ENCODE measurements at regions of chr9 and their contacts with region 1.

Region 1: DNA sequence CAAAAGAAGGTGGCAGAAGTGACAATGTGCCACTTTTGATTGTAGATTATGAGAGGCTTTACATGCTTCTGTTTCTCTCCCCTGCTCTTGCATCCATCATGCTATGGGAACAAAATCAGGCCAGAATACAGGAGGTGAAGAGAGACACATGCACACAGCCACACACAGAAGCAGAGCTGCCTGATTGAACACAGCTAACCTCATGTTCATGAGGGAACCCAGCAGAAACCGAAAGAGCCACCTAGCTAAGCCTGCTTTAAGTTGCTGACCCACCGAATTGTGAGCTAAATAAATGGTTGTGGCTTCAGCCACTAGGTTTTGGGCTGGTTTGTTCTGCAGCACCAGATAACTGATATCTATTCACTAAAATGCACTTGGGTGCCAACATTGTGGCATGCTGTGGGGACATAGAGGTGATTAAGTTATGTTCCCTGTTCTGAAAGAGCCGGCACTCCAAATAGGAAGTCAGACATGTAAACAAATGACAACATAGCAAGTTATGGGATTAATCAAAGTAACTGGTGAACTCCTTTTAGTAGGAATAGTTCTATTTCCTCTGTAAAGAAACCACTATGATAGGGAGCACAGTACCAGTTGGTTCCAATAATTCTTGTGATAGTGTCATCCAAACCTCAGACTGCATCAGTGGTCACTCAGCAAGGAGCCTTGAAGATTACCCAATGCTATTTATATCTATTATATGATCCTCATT is 93.6 kb upstream of the TNC start:
- DNase-seq: no peak
- ATAC-seq: peak; percentile 46
- H3K4me3 Mint-ChIP-seq: peak overlapping the region; percentile 3
- H3K27ac Mint-ChIP-seq: peak overlapping the region; percentile 43
- H3K4me1 Mint-ChIP-seq: peaks cover 68% of the 10 kb centered on the region
- H3K27me3 Mint-ChIP-seq: no peaks in the 10 kb centered on the region
- CTCF ChIP-seq: no peak

Region 2: DNA sequence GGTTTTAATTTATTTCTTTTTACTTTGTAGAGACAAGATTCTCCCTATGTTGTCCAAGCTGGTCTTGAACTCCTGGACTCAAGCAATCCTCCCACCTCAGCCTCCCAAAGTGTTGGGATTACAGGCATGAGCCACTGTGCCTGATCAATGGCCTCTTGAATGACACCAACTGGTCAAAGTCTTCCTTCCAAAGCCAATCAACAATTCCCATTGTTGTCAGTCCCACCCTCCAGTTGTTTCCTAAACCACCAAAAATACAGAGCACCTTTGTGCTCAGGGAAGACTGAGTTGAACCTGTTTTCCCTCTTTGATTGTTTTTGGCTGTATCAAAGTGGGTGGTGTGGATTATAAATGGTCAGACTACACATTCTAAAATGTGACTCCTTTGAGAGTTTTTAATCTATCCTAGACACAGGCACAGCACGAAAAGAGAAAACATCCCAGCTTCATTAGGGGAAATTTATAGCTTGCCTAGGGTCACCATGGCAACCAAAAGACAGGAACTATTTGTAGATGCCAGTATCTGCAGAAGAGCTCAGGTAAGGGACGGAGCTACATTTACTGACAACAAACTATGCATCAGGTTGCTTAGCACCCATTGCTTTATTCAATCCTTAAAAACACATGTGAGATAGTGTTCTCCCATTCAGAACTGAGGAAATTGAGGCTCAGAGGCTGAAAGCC is 651.6 kb before region 1 on chr9:
- CTCF ChIA-PET with region 1: no interaction called
- POLR2A ChIA-PET with region 1: no interaction called
- intact Hi-C with region 1: no loop called
- DNase-seq: no peak
- ATAC-seq: peak; percentile 62
- H3K4me3 Mint-ChIP-seq: no peak overlapping the region
- H3K27ac Mint-ChIP-seq: peak overlapping the region; percentile 8
- H3K4me1 Mint-ChIP-seq: peaks cover 42% of the 10 kb centered on the region
- H3K27me3 Mint-ChIP-seq: no peaks in the 10 kb centered on the region
- CTCF ChIP-seq: no peak

Region 3: DNA sequence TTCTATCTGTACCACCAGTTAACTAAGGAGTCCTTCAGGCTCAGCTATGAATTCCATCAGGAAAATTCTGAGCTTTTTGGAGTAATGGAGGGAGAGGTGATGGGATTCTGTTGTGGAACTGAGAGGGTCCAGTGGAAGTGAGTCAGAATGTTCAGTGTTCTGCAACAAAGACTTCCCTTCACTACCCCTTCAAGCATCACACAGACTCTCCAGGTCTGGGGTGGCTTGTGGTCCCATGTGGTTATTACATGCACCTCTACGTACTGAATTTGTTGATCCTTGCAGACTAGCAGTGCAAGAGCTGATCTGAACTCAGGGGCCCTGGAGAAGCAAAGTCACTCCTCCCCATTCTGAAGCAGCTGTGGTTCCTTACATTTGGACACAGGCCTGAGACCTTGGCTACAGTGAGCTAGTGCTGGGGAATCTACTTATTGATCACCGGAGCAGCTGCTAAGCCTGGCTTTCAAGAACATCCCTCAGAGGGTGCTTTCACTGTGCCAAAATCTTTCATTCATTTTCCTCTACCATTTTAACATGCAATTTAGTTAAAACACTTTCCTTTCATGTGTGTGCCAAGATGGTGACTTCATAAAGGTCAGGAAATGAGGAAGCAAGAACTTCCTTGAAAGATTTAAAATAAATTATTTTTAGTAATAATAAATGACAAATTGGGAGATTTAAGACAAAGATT is 18.6 kb before region 1 on chr9:
- CTCF ChIA-PET with region 1: interaction called, 3 read pairs
- POLR2A ChIA-PET with region 1: interaction called, 6 read pairs
- intact Hi-C with region 1: loop called (anchors 2 kb)
- DNase-seq: no peak
- ATAC-seq: peak; percentile 82
- H3K4me3 Mint-ChIP-seq: no peak overlapping the region
- H3K27ac Mint-ChIP-seq: peak overlapping the region; percentile 32
- H3K4me1 Mint-ChIP-seq: peaks cover 30% of the 10 kb centered on the region
- H3K27me3 Mint-ChIP-seq: no peaks in the 10 kb centered on the region
- CTCF ChIP-seq: no peak